ENCODE measurements at regions of chr6 and their contacts with region 1.

Region 1: DNA sequence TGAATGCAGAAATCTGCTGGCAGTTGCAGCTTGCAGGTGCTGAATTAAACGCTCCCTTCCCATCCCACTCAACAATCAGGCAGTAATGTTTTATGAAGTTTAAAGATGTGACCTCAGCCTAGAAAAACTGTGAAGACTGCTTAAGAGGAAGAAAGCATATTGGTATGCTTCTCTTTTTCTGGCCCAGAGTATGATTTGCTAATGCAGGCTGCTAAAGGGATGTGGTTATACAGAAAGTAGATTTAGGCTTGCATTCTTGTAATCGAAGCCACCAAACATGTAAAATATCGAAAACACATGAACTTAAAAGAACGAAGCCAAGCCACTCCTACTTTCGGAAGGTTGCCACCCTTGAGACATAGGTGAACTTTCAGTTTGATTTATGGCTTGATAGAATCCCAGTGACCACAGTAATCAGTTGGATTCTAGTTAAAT is 40.7 kb downstream of the MAP3K5 start:
- DNase-seq: peak; percentile 37
- H3K4me3 Mint-ChIP-seq: peak overlapping the region; percentile 66
- H3K27ac Mint-ChIP-seq: peak overlapping the region; percentile 70
- H3K4me1 Mint-ChIP-seq: peaks cover 71% of the 10 kb centered on the region
- H3K27me3 Mint-ChIP-seq: peaks cover 10% of the 10 kb centered on the region

Region 2: DNA sequence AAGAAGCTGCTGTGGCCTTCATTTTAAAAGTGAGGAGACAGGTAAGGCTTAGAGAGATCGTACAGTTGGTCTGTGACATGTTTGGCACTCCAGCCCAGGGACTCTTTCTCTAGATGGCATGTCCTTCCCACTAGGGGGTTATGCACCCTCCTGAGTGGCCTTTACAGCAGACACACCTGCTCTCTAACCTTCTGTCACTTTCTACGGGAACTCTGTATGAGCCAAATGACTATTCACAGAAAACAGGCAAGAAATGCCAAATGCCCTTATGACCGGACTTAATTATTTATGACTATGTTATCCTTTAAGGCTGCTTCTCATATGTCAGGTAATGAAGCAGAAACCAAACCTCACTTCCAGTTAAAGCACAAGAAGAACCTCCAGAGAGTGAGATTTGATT is 50.5 kb before region 1 on chr6:
- intact Hi-C with region 1: loop called (anchors 5 kb)
- DNase-seq: no peak
- H3K4me3 Mint-ChIP-seq: no peak overlapping the region
- H3K27ac Mint-ChIP-seq: no peak overlapping the region
- H3K4me1 Mint-ChIP-seq: peaks cover 20% of the 10 kb centered on the region
- H3K27me3 Mint-ChIP-seq: no peaks in the 10 kb centered on the region

Region 3: GRCh38 chr6:136873748-136874147 is 122.2 kb after region 1 on chr6:
- intact Hi-C with region 1: no loop called
- DNase-seq: no peak
- H3K4me3 Mint-ChIP-seq: no peak overlapping the region
- H3K27ac Mint-ChIP-seq: no peak overlapping the region
- H3K4me1 Mint-ChIP-seq: no peaks in the 10 kb centered on the region
- H3K27me3 Mint-ChIP-seq: no peaks in the 10 kb centered on the region